ENCODE measurements at regions of chr10 and their contacts with region 1.

Region 1: GRCh38 chr10:119207367-119207668 is at the start of gene GRK5:
- DNase-seq: peak; percentile 74 to 90
- H3K4me3 ChIP-seq: peak within 1 kb of the TSS; percentile 86
- H3K27ac ChIP-seq: peak within 1 kb of the TSS; percentile 32; the same call in 1 of the 2 replicates
- H3K4me1 ChIP-seq: peaks cover 32% of the 10 kb centered on the region
- H3K27me3 ChIP-seq: no peaks in the 10 kb centered on the region
- CTCF ChIP-seq: no peak
- total RNA-seq, gene GRK5: 4.8 and 5.3 TPM in 2 replicates

Region 2: DNA sequence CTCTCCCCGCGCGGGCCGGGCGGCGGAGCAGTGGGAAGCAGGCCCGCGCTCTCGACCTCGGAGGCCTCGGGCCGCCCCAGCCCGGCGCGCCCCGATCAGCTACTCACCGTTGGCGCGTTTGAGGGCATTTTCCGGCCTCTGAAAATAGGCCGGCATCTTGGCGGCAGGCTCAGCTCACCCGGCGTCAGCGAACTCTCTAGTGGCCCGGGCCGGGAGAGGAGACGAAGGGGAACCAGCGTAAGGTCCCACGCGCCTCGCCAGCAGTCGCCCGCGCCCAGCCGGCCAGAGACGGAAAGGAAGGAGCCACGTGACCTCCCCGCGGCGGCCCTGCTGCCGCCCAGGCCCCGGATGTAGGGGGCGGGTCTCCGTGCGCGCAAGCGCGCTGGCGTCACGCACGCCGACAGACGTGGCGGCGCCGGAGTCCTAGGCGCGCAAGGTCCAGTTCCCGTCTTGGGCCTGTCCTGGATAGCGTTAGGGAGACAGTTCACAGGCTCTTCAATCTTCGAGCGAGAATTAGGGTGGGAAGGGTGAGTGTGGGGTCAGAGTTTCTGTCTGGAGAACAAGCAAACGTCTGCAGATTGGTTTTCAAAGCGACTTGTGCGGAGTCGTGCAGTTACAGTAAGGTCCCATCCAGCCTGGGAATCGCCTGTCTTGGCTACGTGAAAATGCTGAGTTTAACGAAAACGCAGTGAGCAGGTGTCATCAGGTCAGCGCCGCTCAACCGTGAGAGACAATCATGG is 126.6 kb before region 1 on chr10 and contains the start of gene EIF3A:
- CTCF ChIA-PET with region 1: no interaction called
- POLR2A ChIA-PET with region 1: interaction called, 15 read pairs
- intact Hi-C with region 1: no loop called
- DNase-seq: peak; percentile 69 to 87
- H3K4me3 ChIP-seq: peak within 1 kb of the TSS; percentile 84
- H3K27ac ChIP-seq: peak within 1 kb of the TSS; percentile 78
- H3K4me1 ChIP-seq: peaks cover 10% of the 10 kb centered on the region
- H3K27me3 ChIP-seq: no peaks in the 10 kb centered on the region
- CTCF ChIP-seq: no peak
- total RNA-seq, gene EIF3A: 85.5 and 102 TPM in 2 replicates

Region 3: DNA sequence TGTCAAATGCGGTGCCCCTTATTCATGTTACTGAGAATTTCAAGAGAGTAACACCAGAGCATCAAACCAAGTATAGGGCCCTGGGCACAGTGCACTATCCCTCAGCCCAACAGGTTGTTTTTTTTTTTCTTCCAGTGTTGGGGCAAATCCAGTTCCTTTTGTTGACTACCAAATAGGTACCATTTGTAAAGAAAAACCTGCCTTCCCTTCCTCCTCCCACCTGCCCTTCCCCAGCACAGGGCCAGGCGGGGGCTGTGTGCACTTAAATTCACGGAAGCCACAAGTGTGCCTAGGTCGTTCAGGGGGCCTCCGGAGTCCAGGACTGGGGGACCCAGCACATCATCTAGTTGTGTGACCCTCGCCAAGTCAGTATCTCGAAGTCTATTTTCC is 41.2 kb before region 1 on chr10:
- CTCF ChIA-PET with region 1: no interaction called
- POLR2A ChIA-PET with region 1: no interaction called
- intact Hi-C with region 1: no loop called
- DNase-seq: no peak
- H3K4me3 ChIP-seq: peak overlapping the region; percentile 84
- H3K27ac ChIP-seq: peak overlapping the region; percentile 68; the same call in 1 of the 2 replicates
- H3K4me1 ChIP-seq: 0 out of 2 replicates have a peak, but pooled peaks cover 8% of the 10 kb centered on the region
- H3K27me3 ChIP-seq: no peaks in the 10 kb centered on the region
- CTCF ChIP-seq: no peak

Region 4: DNA sequence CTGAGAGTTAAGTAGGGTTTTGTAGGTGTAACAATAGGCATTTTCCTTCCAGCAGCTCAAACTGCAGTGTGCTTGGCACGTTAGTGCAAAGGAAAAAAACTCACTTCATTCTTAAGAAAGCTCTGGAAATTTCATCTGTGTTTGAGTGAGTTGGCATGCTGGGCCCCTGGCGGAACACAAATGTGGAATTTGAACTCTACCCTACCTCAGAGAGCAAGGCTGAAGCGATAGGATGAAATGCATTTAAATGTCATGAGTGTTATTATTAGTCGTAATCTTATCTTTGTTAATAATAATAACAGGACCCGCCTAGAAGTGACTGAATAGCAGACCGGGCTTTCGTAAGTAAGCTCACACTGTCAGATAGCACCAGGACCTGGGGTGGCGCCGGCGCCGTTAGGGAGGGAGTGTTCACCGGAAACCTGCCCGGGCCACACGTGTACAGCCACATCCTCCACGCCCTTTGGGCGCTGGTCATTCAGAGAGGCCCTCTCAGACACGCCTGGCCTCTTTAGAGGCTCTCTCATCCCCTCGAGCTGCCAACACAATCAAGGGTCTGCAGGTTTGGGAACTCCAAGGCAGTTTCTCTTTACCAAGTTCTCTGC is 63.5 kb after region 1 on chr10:
- CTCF ChIA-PET with region 1: interaction called, 15 read pairs
- POLR2A ChIA-PET with region 1: no interaction called
- intact Hi-C with region 1: loop called (anchors 1 kb)
- DNase-seq: peak; percentile 41 to 52
- H3K4me3 ChIP-seq: peak overlapping the region; percentile 33; the same call in 1 of the 2 replicates
- H3K27ac ChIP-seq: peak overlapping the region; percentile 82
- H3K4me1 ChIP-seq: peaks cover 28% of the 10 kb centered on the region
- H3K27me3 ChIP-seq: no peaks in the 10 kb centered on the region
- CTCF ChIP-seq: no peak

Region 5: GRCh38 chr10:119305860-119306513 is 98.7 kb after region 1 on chr10:
- CTCF ChIA-PET with region 1: no interaction called
- POLR2A ChIA-PET with region 1: no interaction called
- intact Hi-C with region 1: loop called (anchors 1 kb)
- DNase-seq: peak; percentile 79 to 93
- H3K4me3 ChIP-seq: peak overlapping the region; percentile 47; the same call in 1 of the 2 replicates
- H3K27ac ChIP-seq: peak overlapping the region; percentile 86
- H3K4me1 ChIP-seq: peaks cover 62% of the 10 kb centered on the region
- H3K27me3 ChIP-seq: no peaks in the 10 kb centered on the region
- CTCF ChIP-seq: no peak

Region 6: GRCh38 chr10:119416855-119417254 is 209.5 kb after region 1 on chr10:
- CTCF ChIA-PET with region 1: interaction called, 10 read pairs
- POLR2A ChIA-PET with region 1: no interaction called
- intact Hi-C with region 1: loop called (anchors 1 kb)
- DNase-seq: peak in 1 of 2 experiments; percentile 55
- H3K4me3 ChIP-seq: no peak overlapping the region
- H3K27ac ChIP-seq: no peak overlapping the region
- H3K4me1 ChIP-seq: no peaks in the 10 kb centered on the region
- H3K27me3 ChIP-seq: no peaks in the 10 kb centered on the region
- CTCF ChIP-seq: peak; percentile 78

Region 7: GRCh38 chr10:119489991-119490326 is 282.6 kb after region 1 on chr10:
- CTCF ChIA-PET with region 1: interaction called, 3 read pairs
- POLR2A ChIA-PET with region 1: no interaction called
- intact Hi-C with region 1: loop called (anchors 2 kb)
- DNase-seq: no peak
- H3K4me3 ChIP-seq: no peak overlapping the region; the same call in 1 of the 2 replicates
- H3K27ac ChIP-seq: no peak overlapping the region
- H3K4me1 ChIP-seq: peaks cover 3% of the 10 kb centered on the region
- H3K27me3 ChIP-seq: no peaks in the 10 kb centered on the region
- CTCF ChIP-seq: peak; percentile 24; the same call in 1 of the 2 replicates

Region 8: GRCh38 chr10:119555178-119555784 is 348.0 kb after region 1 on chr10:
- CTCF ChIA-PET with region 1: no interaction called
- POLR2A ChIA-PET with region 1: no interaction called
- intact Hi-C with region 1: no loop called
- DNase-seq: no peak
- H3K4me3 ChIP-seq: no peak overlapping the region
- H3K27ac ChIP-seq: no peak overlapping the region
- H3K4me1 ChIP-seq: no peaks in the 10 kb centered on the region
- H3K27me3 ChIP-seq: no peaks in the 10 kb centered on the region
- CTCF ChIP-seq: no peak

Region 9: GRCh38 chr10:119859420-119860258 is 652.3 kb after region 1 on chr10:
- CTCF ChIA-PET with region 1: no interaction called
- POLR2A ChIA-PET with region 1: no interaction called
- intact Hi-C with region 1: loop called (anchors 10 kb)
- DNase-seq: no peak
- H3K4me3 ChIP-seq: no peak overlapping the region
- H3K27ac ChIP-seq: peak overlapping the region; percentile 19; the same call in 1 of the 2 replicates
- H3K4me1 ChIP-seq: no peaks in the 10 kb centered on the region
- H3K27me3 ChIP-seq: no peaks in the 10 kb centered on the region
- CTCF ChIP-seq: peak; percentile 76